ENCODE measurements at regions of chr15 and their contacts with region 1.

Region 1: DNA sequence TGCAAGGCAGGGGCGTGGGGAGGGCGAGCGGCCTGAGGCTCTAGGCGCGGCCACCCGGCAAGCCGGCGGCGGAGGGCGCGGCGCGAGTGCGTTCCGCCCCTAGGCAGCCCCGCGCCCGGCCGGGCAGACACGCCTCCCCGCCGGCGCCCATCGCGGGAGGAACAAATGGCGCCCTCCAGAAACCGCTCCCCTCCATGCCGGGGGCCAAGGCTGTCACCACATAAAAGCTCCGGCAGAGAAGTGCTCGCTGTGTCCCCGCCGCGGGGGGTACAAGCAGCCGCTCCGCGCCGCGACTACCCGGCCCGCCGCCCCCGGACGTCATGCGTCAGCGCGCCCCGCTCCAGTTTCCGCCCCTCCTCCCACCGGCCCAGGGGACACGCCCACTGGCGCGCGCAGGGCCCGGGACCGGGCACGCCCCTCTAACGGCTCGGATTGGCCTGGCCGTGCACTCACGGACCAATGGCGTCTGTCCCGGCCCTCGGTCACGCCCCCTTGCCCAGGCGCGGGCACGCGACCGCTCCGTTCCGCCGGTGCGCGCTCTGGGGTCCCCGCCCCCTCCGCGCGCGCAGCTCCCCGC is 391 bp upstream of the KLF13 start:
- DNase-seq: peak; percentile 94 to 100
- ATAC-seq: peak; percentile 91 to 96 (median 92)
- H3K4me3 ChIP-seq: peak overlapping the region; percentile 79
- H3K27ac ChIP-seq: peak overlapping the region; percentile 97
- H3K4me1 ChIP-seq: peaks cover 33% of the 10 kb centered on the region
- H3K27me3 ChIP-seq: no peaks in the 10 kb centered on the region
- CTCF ChIP-seq: no peak

Region 2: DNA sequence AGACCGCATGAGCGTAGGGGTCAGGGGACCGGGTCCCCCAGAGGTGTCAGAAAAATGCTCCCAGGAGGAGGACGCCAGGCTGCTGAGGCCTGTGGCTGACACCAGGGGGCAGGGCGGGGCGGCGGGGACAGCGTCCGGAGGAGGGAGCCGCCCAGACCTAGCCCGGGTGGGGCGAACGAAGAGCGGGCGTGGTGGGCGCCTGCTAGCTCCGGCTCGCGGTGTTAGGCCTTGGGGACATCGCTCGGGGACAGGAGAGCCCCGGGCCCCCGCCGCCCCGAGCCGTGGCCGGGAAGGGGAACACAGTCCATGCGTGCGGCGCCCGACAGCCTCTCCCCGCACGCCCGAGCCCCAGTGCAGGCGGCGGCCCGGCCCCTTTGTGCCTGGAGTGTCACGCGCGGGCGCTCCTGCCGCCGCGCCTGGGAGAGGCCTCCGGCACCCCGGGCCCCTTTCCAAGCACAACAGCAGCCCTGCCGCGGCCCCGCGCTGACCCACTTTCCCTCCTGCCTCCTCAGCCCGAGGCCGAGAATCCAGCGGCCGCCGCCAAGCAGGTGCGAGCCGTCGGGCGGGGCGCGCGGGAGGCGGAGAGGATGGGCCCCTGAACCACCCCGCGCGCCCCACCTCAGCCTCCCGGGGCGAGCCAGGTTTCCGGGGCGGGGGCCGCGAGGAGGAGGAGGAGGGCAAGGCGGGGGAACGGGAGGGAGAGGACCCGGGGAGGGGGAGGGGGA is 110.6 kb before region 1 on chr15:
- intact Hi-C with region 1: loop called (anchors 1 to 5 kb)
- DNase-seq: peak; percentile 76 to 93
- ATAC-seq: peak; percentile 88 to 89 (median 88)
- H3K4me3 ChIP-seq: peak overlapping the region; percentile 72
- H3K27ac ChIP-seq: peak overlapping the region; percentile 88
- H3K4me1 ChIP-seq: peaks cover 10% of the 10 kb centered on the region
- H3K27me3 ChIP-seq: no peaks in the 10 kb centered on the region
- CTCF ChIP-seq: peak; percentile 76

Region 3: DNA sequence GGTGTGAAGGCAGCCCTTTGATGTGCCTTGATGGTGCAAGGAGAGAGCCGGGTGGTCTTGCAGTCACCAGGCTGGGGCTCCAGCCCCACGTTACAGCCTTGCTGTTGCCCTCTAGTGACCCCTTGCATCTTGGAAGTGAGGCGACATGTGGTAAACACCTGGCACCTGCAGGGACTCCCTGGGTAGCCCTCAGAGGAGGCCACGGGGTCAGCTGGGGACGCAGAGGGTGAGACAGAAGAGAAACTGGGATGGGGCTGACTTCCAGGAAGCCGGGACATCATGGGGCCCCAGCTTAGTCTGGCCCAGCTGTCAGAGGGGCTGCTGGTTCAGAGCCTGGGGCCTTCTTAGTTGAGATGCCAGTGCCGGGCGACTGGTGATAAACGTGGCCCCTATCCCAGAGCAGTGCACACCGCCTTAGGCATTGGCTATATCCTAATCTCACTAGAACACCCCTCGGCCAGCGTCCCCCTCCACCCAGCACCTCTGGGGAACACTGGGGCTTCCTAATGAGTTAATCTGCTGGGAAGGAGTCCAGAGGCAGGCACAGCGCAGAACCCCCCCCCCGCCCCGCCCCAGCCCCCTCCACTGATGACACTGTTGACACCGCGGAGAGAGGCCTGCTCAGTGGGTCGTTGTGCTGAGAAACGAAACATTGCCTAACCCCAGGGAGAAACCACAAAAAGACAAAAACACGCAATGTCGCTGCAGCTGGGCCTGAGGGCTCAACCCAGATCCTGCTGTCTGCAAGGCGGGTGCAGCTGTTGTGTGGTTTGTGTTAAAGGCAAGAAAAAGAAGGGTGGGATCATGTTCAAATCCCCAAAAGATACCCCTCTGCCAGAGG is 60.2 kb before region 1 on chr15:
- intact Hi-C with region 1: loop called in 1 of 2 experiments (anchors 5 kb)
- DNase-seq: peak in 1 of 2 donors; percentile 59
- ATAC-seq: peak in 1 of 4 donors; percentile 32
- H3K4me3 ChIP-seq: no peak overlapping the region
- H3K27ac ChIP-seq: no peak overlapping the region
- H3K4me1 ChIP-seq: peaks cover 16% of the 10 kb centered on the region
- H3K27me3 ChIP-seq: no peaks in the 10 kb centered on the region
- CTCF ChIP-seq: no peak

Region 4: DNA sequence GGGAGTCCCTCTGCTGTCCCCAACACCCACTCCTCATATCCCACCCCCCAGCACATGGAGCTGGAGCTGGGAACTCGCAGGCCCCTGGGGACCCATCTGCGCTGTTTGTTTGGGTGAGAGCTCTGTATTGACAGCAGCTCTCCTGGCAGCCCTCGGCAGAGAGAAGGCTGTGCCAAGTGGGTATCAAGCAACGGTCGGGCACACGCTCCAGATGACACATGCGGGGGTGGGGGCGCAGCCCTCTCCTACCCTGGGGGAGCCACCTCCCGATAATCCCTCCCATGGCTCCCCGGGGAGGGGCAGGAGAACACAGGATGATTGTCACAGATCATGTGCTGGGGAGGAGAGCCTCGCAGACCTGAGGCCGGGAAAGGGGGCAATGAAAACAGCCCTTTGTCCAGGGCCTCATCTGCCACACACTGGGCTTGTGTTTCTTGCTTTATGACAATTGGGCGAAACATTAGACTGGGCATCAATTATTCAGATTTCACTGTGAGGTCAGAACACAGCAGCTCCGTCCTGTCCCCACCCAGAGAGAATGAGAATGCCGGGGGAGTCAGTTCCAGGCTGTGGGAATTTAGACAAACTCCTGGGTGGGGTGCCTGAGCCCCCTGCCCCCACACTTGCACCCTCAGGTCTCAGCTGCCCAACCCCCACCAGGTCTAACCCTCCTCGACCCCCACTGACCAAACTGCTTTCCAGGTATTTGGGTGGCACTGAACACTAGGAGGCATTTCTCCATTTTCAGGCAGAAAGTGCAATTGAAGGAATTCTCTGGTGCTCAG is 46.0 kb before region 1 on chr15:
- intact Hi-C with region 1: no loop called
- DNase-seq: peak in 1 of 2 donors; percentile 55
- ATAC-seq: peak in 3 of 4 donors; percentile 23 to 63 (median 54)
- H3K4me3 ChIP-seq: no peak overlapping the region
- H3K27ac ChIP-seq: no peak overlapping the region
- H3K4me1 ChIP-seq: peaks cover 5% of the 10 kb centered on the region
- H3K27me3 ChIP-seq: no peaks in the 10 kb centered on the region
- CTCF ChIP-seq: no peak

Region 5: GRCh38 chr15:31384568-31384967 is 58.3 kb after region 1 on chr15:
- intact Hi-C with region 1: no loop called
- DNase-seq: no peak
- ATAC-seq: no peak
- H3K4me3 ChIP-seq: no peak overlapping the region
- H3K27ac ChIP-seq: no peak overlapping the region
- H3K4me1 ChIP-seq: peaks cover 16% of the 10 kb centered on the region
- H3K27me3 ChIP-seq: no peaks in the 10 kb centered on the region
- CTCF ChIP-seq: no peak

Region 6: GRCh38 chr15:31396881-31397560 is 70.8 kb after region 1 on chr15:
- intact Hi-C with region 1: loop called (anchors 2 to 5 kb)
- DNase-seq: peak; percentile 86 to 97
- ATAC-seq: peak; percentile 82 to 89 (median 88)
- H3K4me3 ChIP-seq: peak overlapping the region; percentile 50
- H3K27ac ChIP-seq: peak overlapping the region; percentile 79
- H3K4me1 ChIP-seq: peaks cover 15% of the 10 kb centered on the region
- H3K27me3 ChIP-seq: no peaks in the 10 kb centered on the region
- CTCF ChIP-seq: no peak

Region 7: GRCh38 chr15:31488426-31489204 is 162.4 kb after region 1 on chr15:
- intact Hi-C with region 1: loop called in 1 of 2 experiments (anchors 5 kb)
- DNase-seq: peak in 1 of 2 donors; percentile 27
- ATAC-seq: peak; percentile 67 to 88 (median 74)
- H3K4me3 ChIP-seq: no peak overlapping the region
- H3K27ac ChIP-seq: no peak overlapping the region
- H3K4me1 ChIP-seq: peaks cover 13% of the 10 kb centered on the region
- H3K27me3 ChIP-seq: peaks cover 0 to 5% (median 0%) of the 10 kb centered on the region in 3 donors
- CTCF ChIP-seq: peak; percentile 76

Region 8: GRCh38 chr15:31605371-31605931 is 279.2 kb after region 1 on chr15:
- intact Hi-C with region 1: no loop called
- DNase-seq: no peak
- ATAC-seq: no peak
- H3K4me3 ChIP-seq: no peak overlapping the region
- H3K27ac ChIP-seq: no peak overlapping the region
- H3K4me1 ChIP-seq: no peaks in the 10 kb centered on the region
- H3K27me3 ChIP-seq: no peaks in the 10 kb centered on the region
- CTCF ChIP-seq: no peak

Region 9: GRCh38 chr15:31774045-31774444 is 447.8 kb after region 1 on chr15:
- intact Hi-C with region 1: no loop called
- DNase-seq: no peak
- ATAC-seq: no peak
- H3K4me3 ChIP-seq: no peak overlapping the region
- H3K27ac ChIP-seq: no peak overlapping the region
- H3K4me1 ChIP-seq: no peaks in the 10 kb centered on the region
- H3K27me3 ChIP-seq: no peaks in the 10 kb centered on the region
- CTCF ChIP-seq: no peak